Spleen (tissue), 13 donors: ENCODE measurements at regions of chr1 and their contacts with region 1.

Region 1: DNA sequence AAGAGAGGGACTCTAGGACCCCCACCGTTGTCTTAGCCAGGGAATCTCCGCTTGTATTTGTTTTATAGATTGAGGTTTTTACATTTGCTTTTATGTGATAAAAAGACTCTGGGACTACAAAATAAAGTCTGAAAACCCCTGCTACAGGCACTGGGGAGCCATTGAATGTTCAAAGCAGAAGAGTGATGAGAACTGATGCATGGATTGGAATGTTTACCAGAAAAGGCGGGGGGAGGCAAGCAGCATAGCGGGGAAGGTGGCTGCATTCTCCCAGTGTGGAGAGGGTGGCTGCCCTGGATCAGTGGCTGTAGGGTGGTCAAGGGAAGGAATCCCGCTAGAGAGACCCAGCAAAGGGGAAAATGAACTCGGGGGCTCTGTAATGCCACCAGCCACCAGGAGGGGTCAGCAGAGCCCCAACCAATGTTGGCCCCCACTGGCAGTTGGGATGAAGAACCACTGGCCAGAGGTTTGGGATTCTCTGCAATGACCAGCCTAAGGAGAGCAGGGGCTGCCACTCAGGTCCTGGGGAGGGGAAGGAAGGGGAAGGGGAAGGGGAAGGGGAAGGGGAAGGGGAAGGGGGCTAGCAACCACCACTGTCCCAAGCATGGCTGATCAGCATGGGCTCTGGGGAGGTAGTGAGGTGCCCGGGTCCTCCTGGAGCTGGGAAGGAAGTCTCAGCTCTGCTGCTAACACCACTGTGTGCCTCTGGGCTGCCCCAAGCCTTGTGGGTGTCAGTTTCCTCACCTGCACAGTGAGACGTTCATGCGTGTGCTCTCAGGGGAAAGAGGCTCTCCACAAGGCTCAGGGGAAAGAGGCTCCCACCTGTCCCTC is 19.2 kb upstream of the PEF1 start:
- DNase-seq: peak; percentile 83
- H3K4me3 ChIP-seq: no peak overlapping the region
- H3K27ac ChIP-seq: no peak overlapping the region
- H3K4me1 ChIP-seq: peaks cover 0 to 23% (median 0%) of the 10 kb centered on the region in 6 donors
- H3K27me3 ChIP-seq: peaks cover 0 to 15% (median 0%) of the 10 kb centered on the region in 7 donors
- CTCF ChIP-seq: peak; percentile 72 to 98 (median 93)
- POLR2A ChIP-seq: no peak

Region 2: DNA sequence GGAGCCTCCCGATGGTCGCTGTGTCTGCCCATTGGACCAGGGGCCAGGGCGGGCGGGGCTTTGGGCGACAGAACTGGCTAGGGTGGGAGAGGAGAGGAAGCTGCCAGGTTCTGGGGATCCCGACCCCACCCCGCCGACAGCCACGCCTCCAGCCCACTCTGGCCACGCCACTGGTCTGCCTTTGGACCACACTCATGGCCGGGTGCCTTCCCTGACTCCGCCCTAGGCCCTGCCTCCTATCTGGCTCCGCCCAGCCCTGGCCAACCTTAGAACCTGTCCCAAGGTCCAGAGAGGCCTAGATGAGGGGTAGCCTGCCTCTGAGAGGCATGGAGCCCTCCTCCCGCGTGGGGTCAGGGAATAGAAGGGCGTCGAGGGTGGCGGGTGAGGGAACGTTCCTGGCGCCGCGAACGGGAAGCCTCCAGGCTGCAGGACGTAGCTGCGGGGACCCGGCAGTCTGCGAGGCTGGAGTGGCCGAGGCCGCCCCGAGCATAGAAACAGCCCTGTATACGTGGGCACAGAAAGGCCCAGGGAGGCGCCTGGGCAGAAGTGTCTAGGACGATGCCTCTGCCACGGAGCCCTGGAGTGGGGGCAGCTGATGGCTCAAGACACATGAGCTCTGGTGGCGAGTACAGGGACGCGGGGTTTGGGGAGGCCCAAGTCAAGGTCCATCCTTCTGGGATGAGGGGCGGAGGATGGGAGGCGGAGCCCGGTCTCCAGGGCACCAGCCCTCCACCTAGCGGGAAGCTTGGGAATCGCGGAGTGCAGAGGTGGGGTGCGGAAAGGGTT is 51.4 kb after region 1 on chr1:
- intact Hi-C with region 1: loop called (anchors 10 kb)
- DNase-seq: peak; percentile 87
- H3K4me3 ChIP-seq: peak overlapping the region; percentile 25 to 69 (median 36)
- H3K27ac ChIP-seq: peak overlapping the region; percentile 60 to 84 (median 82)
- H3K4me1 ChIP-seq: peaks cover 13 to 31% (median 24%) of the 10 kb centered on the region in 6 donors
- H3K27me3 ChIP-seq: peaks cover 0 to 58% (median 8%) of the 10 kb centered on the region in 7 donors
- CTCF ChIP-seq: peak; percentile 39 to 81 (median 72)
- POLR2A ChIP-seq: no peak